ENCODE measurements at regions of chr7 and their contacts with region 1.

Region 1: GRCh38 chr7:135662373-135663114 is at the start of gene STMP1:
- DNase-seq: peak; percentile 92 to 94 (median 93)
- H3K4me3 ChIP-seq: peak within 1 kb of the TSS; percentile 86 to 98
- H3K4me3 Mint-ChIP-seq: peak within 1 kb of the TSS; percentile 91 to 98 (median 96)
- H3K27ac ChIP-seq: peak within 1 kb of the TSS; percentile 76
- H3K27ac Mint-ChIP-seq: peak within 1 kb of the TSS; percentile 83 to 98 (median 95)
- H3K4me1 ChIP-seq: peaks cover 30% of the 10 kb centered on the region
- H3K4me1 Mint-ChIP-seq: peaks cover 25 to 52% (median 38%) of the 10 kb centered on the region in 4 donors
- H3K27me3 ChIP-seq: no peaks in the 10 kb centered on the region
- H3K27me3 Mint-ChIP-seq: no peaks in the 10 kb centered on the region
- total RNA-seq, gene STMP1: 29.5 to 29.7 TPM

Region 2: DNA sequence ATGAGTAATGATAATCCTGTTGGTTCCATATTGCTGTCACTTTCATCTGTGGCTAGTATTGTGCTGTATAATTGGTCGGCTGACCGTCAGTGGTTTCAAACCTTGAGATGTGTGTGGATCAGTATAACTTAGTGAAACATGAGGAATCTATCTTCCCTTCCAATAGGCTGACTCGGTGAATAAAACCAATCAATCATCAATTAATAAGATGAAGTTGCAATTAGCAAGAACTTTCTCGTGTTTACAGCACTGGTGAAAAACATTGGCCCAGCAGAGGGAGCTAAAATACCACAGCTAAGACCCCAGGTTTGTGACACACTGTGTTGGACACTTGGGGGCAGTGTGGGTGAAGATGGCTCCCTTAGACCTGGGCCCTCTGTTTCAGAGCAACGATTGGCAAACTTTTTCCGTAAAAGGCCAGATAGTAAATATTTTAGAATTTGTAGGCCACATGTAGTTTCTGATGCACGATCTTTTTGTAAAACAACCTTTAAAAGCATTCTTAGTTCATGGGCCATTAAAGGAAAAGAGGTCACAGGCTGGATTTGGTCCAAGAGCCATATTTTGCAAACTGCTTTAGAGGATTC is 381.1 kb before region 1 on chr7:
- CTCF ChIA-PET with region 1: interaction called, 6 read pairs
- POLR2A ChIA-PET with region 1: interaction called, 3 read pairs
- intact Hi-C with region 1: loop called (anchors 5 kb)
- DNase-seq: peak; percentile 77 to 79 (median 78)
- H3K4me3 ChIP-seq: no peak overlapping the region
- H3K4me3 Mint-ChIP-seq: peak overlapping the region in 6 of 8 donors; percentile 16 to 72 (median 36)
- H3K27ac ChIP-seq: no peak overlapping the region
- H3K27ac Mint-ChIP-seq: peak overlapping the region in 4 of 7 donors; percentile 59 to 85 (median 72)
- H3K4me1 ChIP-seq: peaks cover 21% of the 10 kb centered on the region
- H3K4me1 Mint-ChIP-seq: peaks cover 15 to 24% (median 21%) of the 10 kb centered on the region in 4 donors
- H3K27me3 ChIP-seq: no peaks in the 10 kb centered on the region
- H3K27me3 Mint-ChIP-seq: peaks cover 5 to 8% of the 10 kb centered on the region in 2 donors

Region 3: DNA sequence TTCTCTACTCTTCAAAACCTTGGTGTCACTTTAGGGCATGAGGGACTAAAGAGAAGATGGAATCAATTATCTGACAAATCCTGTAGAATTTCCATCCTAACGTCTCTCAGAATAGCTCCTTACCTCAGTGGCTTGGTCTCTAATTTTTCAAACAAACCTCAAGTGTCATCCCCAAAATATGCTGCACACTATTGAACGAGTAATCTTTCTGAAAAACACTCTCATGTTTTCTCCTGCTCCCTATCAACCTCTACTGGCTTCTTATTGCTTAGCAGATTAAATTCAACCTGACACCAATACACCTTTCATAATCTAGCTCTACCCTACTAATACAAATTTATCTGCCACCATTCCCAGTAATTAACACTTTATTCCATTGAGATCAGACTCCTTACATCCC is 161.1 kb before region 1 on chr7:
- CTCF ChIA-PET with region 1: no interaction called
- POLR2A ChIA-PET with region 1: no interaction called
- intact Hi-C with region 1: no loop called
- DNase-seq: no peak
- H3K4me3 ChIP-seq: no peak overlapping the region
- H3K4me3 Mint-ChIP-seq: peak overlapping the region in 3 of 8 donors; percentile 13 to 57 (median 16)
- H3K27ac ChIP-seq: no peak overlapping the region
- H3K27ac Mint-ChIP-seq: peak overlapping the region in 3 of 7 donors; percentile 12 to 61 (median 18)
- H3K4me1 ChIP-seq: peaks cover 42% of the 10 kb centered on the region
- H3K4me1 Mint-ChIP-seq: peaks cover 34 to 66% (median 50%) of the 10 kb centered on the region in 4 donors
- H3K27me3 ChIP-seq: no peaks in the 10 kb centered on the region
- H3K27me3 Mint-ChIP-seq: no peaks in the 10 kb centered on the region

Region 4: GRCh38 chr7:135558337-135558767 is 104.2 kb before region 1 on chr7:
- CTCF ChIA-PET with region 1: interaction called, 4 read pairs
- POLR2A ChIA-PET with region 1: interaction called, 7 read pairs
- intact Hi-C with region 1: loop called (anchors 1 kb)
- DNase-seq: peak; percentile 68 to 80 (median 70)
- H3K4me3 ChIP-seq: peak overlapping the region; percentile 92 to 96
- H3K4me3 Mint-ChIP-seq: no peak overlapping the region
- H3K27ac ChIP-seq: peak overlapping the region; percentile 92
- H3K27ac Mint-ChIP-seq: no peak overlapping the region
- H3K4me1 ChIP-seq: peaks cover 24% of the 10 kb centered on the region
- H3K4me1 Mint-ChIP-seq: peaks cover 17 to 23% (median 19%) of the 10 kb centered on the region in 4 donors
- H3K27me3 ChIP-seq: no peaks in the 10 kb centered on the region
- H3K27me3 Mint-ChIP-seq: peaks cover 0 to 2% of the 10 kb centered on the region in 2 donors

Region 5: GRCh38 chr7:135584362-135585353 is 77.9 kb before region 1 on chr7:
- CTCF ChIA-PET with region 1: no interaction called
- POLR2A ChIA-PET with region 1: no interaction called
- intact Hi-C with region 1: no loop called
- DNase-seq: no peak
- H3K4me3 ChIP-seq: no peak overlapping the region
- H3K4me3 Mint-ChIP-seq: no peak overlapping the region
- H3K27ac ChIP-seq: no peak overlapping the region
- H3K27ac Mint-ChIP-seq: no peak overlapping the region
- H3K4me1 ChIP-seq: no peaks in the 10 kb centered on the region
- H3K4me1 Mint-ChIP-seq: peaks cover 0 to 3% (median 0%) of the 10 kb centered on the region in 4 donors
- H3K27me3 ChIP-seq: no peaks in the 10 kb centered on the region
- H3K27me3 Mint-ChIP-seq: no peaks in the 10 kb centered on the region

Region 6: DNA sequence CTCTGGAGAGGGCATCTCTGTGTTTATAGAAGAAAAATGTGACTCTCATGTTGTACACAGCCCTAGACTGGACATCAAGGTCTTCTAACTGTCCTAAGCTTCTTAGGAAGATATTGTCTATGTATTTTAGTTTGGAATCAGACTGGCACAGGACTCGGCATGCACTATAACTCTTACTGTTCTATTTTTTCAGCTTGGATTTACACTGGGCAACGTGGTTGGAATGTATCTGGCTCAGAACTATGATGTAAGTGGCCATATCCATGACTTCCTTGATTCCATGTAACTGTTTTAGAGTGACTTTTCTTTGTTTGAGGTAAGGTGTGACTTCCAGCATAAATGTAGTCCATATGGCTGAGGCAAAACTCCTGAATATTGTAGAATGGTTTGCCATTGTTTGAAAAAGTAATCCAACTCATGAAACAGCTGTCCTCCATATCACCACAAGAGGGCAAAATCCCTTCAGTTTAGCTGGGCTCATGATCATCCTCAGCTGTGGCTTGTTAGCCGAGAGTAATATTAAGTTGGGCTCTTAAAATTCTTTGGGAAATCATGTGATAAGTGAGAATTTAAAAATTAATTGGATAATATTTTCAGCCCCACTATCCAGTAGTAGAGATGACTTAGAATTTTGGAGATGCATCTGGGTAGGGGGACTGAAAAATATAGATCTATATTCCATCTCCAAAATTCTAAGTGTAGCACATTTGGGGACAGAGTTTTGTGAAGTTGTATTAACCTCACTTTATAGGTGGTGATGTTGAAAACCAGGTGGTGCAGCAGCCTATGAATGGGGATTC is 10.2 kb after region 1 on chr7:
- CTCF ChIA-PET with region 1: interaction called, 34 read pairs
- POLR2A ChIA-PET with region 1: interaction called, 5 read pairs
- intact Hi-C with region 1: no loop called
- DNase-seq: peak in 2 of 5 donors; percentile 7 to 11
- H3K4me3 ChIP-seq: no peak overlapping the region
- H3K4me3 Mint-ChIP-seq: no peak overlapping the region
- H3K27ac ChIP-seq: no peak overlapping the region
- H3K27ac Mint-ChIP-seq: no peak overlapping the region
- H3K4me1 ChIP-seq: no peaks in the 10 kb centered on the region
- H3K4me1 Mint-ChIP-seq: peaks cover 11 to 42% (median 24%) of the 10 kb centered on the region in 4 donors
- H3K27me3 ChIP-seq: no peaks in the 10 kb centered on the region
- H3K27me3 Mint-ChIP-seq: no peaks in the 10 kb centered on the region

Region 7: DNA sequence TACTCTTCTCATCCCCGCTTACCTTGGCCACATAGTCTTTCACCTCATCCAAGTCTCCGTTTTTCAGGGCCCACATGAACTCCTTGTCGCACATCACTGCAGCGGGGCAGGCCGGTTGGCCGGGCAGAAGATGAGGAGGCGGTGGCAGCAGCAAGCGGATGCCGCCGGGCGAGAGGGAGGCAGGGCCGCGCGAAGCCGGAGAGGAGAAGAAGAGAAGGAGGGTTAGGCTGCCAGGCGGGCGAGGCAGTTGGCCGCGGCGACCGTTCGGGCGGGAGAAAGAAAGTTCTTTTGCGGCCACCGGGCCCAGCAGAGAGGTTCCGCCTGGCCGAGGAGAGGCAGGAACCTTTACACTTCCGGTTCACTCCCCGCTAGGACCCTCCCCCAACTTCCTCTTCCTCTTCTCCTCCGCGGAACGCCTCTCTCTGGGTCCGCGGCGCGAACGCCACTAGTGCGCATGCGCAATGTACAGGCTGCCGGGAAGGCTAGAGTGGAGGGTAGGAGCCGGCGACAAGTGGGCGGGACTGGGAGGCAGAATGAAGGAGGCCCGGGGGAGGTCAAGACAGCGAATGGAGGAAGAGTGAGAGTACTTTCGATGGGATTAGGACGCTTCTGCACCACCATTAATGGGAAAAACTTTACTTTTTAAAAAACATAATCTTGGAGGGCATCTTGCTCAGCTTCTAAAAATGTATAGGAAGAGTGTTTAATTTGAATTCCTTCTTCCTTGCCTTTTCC is 314.6 kb after region 1 on chr7 and contains the start of gene MTPN:
- CTCF ChIA-PET with region 1: interaction called, 5 read pairs
- POLR2A ChIA-PET with region 1: interaction called, 8 read pairs
- intact Hi-C with region 1: loop called (anchors 1 kb)
- DNase-seq: peak; percentile 95 to 98 (median 97)
- H3K4me3 ChIP-seq: peak within 1 kb of the TSS; percentile 82 to 90
- H3K4me3 Mint-ChIP-seq: peak within 1 kb of the TSS; percentile 89 to 100 (median 96)
- H3K27ac ChIP-seq: peak within 1 kb of the TSS; percentile 93
- H3K27ac Mint-ChIP-seq: peak within 1 kb of the TSS; percentile 89 to 98 (median 95)
- H3K4me1 ChIP-seq: peaks cover 88% of the 10 kb centered on the region
- H3K4me1 Mint-ChIP-seq: peaks cover 59 to 94% (median 76%) of the 10 kb centered on the region in 4 donors
- H3K27me3 ChIP-seq: no peaks in the 10 kb centered on the region
- H3K27me3 Mint-ChIP-seq: no peaks in the 10 kb centered on the region
- total RNA-seq, gene MTPN: 83.1 to 84.5 TPM

Region 8: GRCh38 chr7:136130819-136131643 is 468.5 kb after region 1 on chr7:
- CTCF ChIA-PET with region 1: no interaction called
- POLR2A ChIA-PET with region 1: no interaction called
- intact Hi-C with region 1: no loop called
- DNase-seq: no peak
- H3K4me3 ChIP-seq: no peak overlapping the region
- H3K4me3 Mint-ChIP-seq: no peak overlapping the region
- H3K27ac ChIP-seq: no peak overlapping the region
- H3K27ac Mint-ChIP-seq: no peak overlapping the region
- H3K4me1 ChIP-seq: no peaks in the 10 kb centered on the region
- H3K4me1 Mint-ChIP-seq: peaks cover 0 to 9% (median 3%) of the 10 kb centered on the region in 4 donors
- H3K27me3 ChIP-seq: no peaks in the 10 kb centered on the region
- H3K27me3 Mint-ChIP-seq: no peaks in the 10 kb centered on the region